SK-N-SH (cell line): ENCODE measurements at regions of chr5 and their contacts with region 1.

Region 1: GRCh38 chr5:178120868-178121357 is 7.6 kb downstream of the N4BP3 start:
- DNase-seq: peak; percentile 95
- H3K4me3 ChIP-seq: peak overlapping the region in 1 of 2 experiments; percentile 12; a peak in 1 of 4 replicates
- H3K27ac ChIP-seq: peak overlapping the region in 1 of 2 experiments; percentile 58; a peak in 1 of 4 replicates
- H3K4me1 ChIP-seq: peaks cover 0 to 37% of the 10 kb centered on the region in 2 experiments; a peak in 1 of 4 replicates
- H3K27me3 ChIP-seq: no peaks in the 10 kb centered on the region
- CTCF ChIP-seq: peak; percentile 56
- EP300 ChIP-seq: no peak
- RAD21 ChIP-seq: peak; percentile 36

Region 2: DNA sequence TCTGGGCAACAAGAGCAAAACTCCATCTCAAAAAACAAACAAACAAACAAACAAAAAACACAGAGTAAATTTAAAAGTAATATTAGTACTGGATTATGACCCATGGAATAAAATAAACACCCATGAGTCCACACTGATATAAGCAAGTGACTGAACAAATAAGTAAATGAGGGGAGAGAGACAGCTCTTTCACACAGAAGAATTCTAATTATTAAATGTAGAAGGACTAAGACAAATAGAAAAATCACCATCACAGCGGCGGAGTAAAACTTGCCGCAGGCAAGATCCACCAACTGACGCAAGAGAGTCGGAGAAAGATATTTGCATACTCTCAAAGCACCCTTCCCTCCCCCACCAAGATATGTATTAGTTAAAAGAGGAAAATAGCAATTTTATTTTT is 22.3 kb before region 1 on chr5:
- CTCF ChIA-PET with region 1: interaction called, 13 read pairs
- POLR2A ChIA-PET with region 1: no interaction called
- DNase-seq: no peak
- H3K4me3 ChIP-seq: no peak overlapping the region
- H3K27ac ChIP-seq: no peak overlapping the region
- H3K4me1 ChIP-seq: no peaks in the 10 kb centered on the region
- H3K27me3 ChIP-seq: no peaks in the 10 kb centered on the region
- CTCF ChIP-seq: no peak
- EP300 ChIP-seq: no peak
- RAD21 ChIP-seq: no peak

Region 3: GRCh38 chr5:178104492-178104891 is 16.4 kb before region 1 on chr5:
- CTCF ChIA-PET with region 1: interaction called, 21 read pairs
- POLR2A ChIA-PET with region 1: no interaction called
- DNase-seq: no peak
- H3K4me3 ChIP-seq: no peak overlapping the region
- H3K27ac ChIP-seq: no peak overlapping the region
- H3K4me1 ChIP-seq: peaks cover 0 to 15% of the 10 kb centered on the region in 2 experiments; a peak in 1 of 4 replicates
- H3K27me3 ChIP-seq: no peaks in the 10 kb centered on the region
- CTCF ChIP-seq: no peak
- EP300 ChIP-seq: no peak
- RAD21 ChIP-seq: no peak

Region 4: GRCh38 chr5:178146020-178146820 is 25.3 kb after region 1 on chr5:
- CTCF ChIA-PET with region 1: interaction called, 26 read pairs
- POLR2A ChIA-PET with region 1: interaction called, 4 read pairs
- DNase-seq: peak; percentile 81
- H3K4me3 ChIP-seq: no peak overlapping the region
- H3K27ac ChIP-seq: no peak overlapping the region; a peak in 1 of 4 replicates
- H3K4me1 ChIP-seq: peaks cover 0 to 2% of the 10 kb centered on the region in 2 experiments; a peak in 1 of 4 replicates
- H3K27me3 ChIP-seq: no peaks in the 10 kb centered on the region
- CTCF ChIP-seq: peak; percentile 74
- EP300 ChIP-seq: no peak
- RAD21 ChIP-seq: peak; percentile 63

Region 5: GRCh38 chr5:178174456-178174855 is 53.5 kb after region 1 on chr5:
- CTCF ChIA-PET with region 1: no interaction called
- POLR2A ChIA-PET with region 1: no interaction called
- DNase-seq: no peak
- H3K4me3 ChIP-seq: no peak overlapping the region
- H3K27ac ChIP-seq: no peak overlapping the region
- H3K4me1 ChIP-seq: no peaks in the 10 kb centered on the region
- H3K27me3 ChIP-seq: no peaks in the 10 kb centered on the region
- CTCF ChIP-seq: no peak
- EP300 ChIP-seq: no peak
- RAD21 ChIP-seq: no peak

Region 6: GRCh38 chr5:178404987-178405386 is 284.1 kb after region 1 on chr5:
- CTCF ChIA-PET with region 1: no interaction called
- POLR2A ChIA-PET with region 1: no interaction called
- DNase-seq: no peak
- H3K4me3 ChIP-seq: no peak overlapping the region
- H3K27ac ChIP-seq: no peak overlapping the region; a peak in 1 of 4 replicates
- H3K4me1 ChIP-seq: peaks cover 0 to 2% of the 10 kb centered on the region in 2 experiments; a peak in 1 of 4 replicates
- H3K27me3 ChIP-seq: no peaks in the 10 kb centered on the region
- CTCF ChIP-seq: no peak
- EP300 ChIP-seq: no peak
- RAD21 ChIP-seq: no peak